ENCODE measurements at regions of chr20 and their contacts with region 1.

Region 1: GRCh38 chr20:59598625-59599310 is 5.6 kb upstream of the PHACTR3 start:
- DNase-seq: peak; percentile 73
- H3K4me3 Mint-ChIP-seq: no peak overlapping the region
- H3K27ac Mint-ChIP-seq: no peak overlapping the region
- H3K4me1 Mint-ChIP-seq: no peaks in the 10 kb centered on the region
- H3K27me3 Mint-ChIP-seq: peaks cover 39% of the 10 kb centered on the region

Region 2: DNA sequence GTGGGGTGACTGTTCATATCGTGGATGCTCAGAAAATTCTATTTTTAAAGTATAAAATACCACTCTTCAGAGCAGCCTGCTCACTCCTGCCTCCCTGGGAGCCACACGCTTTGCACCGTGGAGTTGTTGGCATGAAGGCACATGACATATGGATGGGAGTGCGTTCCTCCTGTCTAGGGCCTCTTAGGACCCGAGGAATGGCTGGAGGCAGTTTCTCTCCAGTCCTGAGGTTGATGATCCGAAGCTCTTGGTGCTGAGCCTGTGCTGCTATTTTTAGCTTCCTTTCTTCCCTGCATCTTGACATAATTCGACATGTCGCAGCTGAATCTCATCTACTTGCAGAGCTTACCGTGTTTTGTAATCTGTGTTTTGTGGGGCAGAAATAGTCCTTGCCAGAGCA is 79.5 kb after region 1 on chr20:
- intact Hi-C with region 1: no loop called
- DNase-seq: no peak
- H3K4me3 Mint-ChIP-seq: no peak overlapping the region
- H3K27ac Mint-ChIP-seq: no peak overlapping the region
- H3K4me1 Mint-ChIP-seq: no peaks in the 10 kb centered on the region
- H3K27me3 Mint-ChIP-seq: peaks cover 3% of the 10 kb centered on the region

Region 3: GRCh38 chr20:59751056-59751688 is 152.4 kb after region 1 on chr20:
- intact Hi-C with region 1: loop called (anchors 10 kb)
- DNase-seq: peak; percentile 75
- H3K4me3 Mint-ChIP-seq: no peak overlapping the region
- H3K27ac Mint-ChIP-seq: no peak overlapping the region
- H3K4me1 Mint-ChIP-seq: no peaks in the 10 kb centered on the region
- H3K27me3 Mint-ChIP-seq: peaks cover 1% of the 10 kb centered on the region

Measured in activated CD4-positive, alpha-beta T cell treated with anti-CD3 and anti-CD28 coated beads, Interleukin-2, amount 10 ng/mL, durations not matched to agents 24 days and 14 days (primary cell).